K562 (cell line): ENCODE measurements at regions of chr1 and their contacts with region 1.

Region 1: DNA sequence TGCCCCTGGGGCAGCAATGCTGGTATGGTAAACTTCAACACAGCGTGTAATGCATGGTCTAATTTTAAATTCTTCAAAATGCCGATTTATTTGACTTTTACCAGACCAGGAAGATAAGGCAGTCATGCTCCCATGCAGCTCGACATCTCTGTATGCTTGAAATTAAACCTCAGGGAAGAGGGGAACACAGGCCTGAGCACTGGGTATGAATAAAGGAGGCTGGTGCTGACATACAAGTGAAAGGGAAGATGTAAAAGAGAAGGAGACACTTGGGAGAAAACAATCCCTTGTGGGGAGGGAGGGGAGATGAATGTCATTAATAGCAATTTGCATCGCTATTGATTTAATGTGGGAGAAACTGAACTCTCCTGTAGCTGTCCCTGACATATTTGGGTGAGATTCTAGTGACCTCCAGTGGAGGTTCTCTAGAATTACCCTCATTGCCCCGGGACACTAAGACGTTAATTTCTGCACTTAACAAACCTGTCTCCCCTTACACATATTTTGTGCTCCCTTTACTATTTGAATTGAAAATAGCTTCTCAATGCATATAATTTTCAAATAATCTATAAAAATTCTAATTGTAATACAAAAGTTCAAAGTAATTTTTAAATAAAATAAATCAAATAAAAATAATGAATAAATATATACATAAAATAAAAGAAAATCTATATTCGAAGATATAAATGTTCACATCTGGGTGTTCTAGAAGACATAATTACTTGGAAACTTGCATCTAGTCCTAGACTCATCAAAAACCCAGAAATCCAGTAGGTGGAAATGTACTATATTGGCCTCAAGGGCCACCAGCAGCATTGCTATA is 283.1 kb downstream of the LMX1A start:
- DNase-seq: peak in 3 of 4 experiments; percentile 23 to 57 (median 49)
- ATAC-seq: peak; percentile 88
- H3K4me3 ChIP-seq: no peak overlapping the region
- H3K27ac ChIP-seq: no peak overlapping the region
- H3K4me1 ChIP-seq: no peaks in the 10 kb centered on the region
- H3K27me3 ChIP-seq: no peaks in the 10 kb centered on the region
- CTCF ChIP-seq: peak; percentile 60 to 70 (median 61)
- EP300 ChIP-seq: no peak
- POLR2A ChIP-seq: no peak
- RAD21 ChIP-seq: peak; percentile 72 to 78

Region 2: GRCh38 chr1:163361123-163361934 is 1712.1 kb before region 1 on chr1:
- CTCF ChIA-PET with region 1: interaction called, 3 read pairs
- POLR2A ChIA-PET with region 1: no interaction called
- in situ Hi-C with region 1: no loop called
- intact Hi-C with region 1: loop called (anchors 1 kb)
- DNase-seq: peak in 2 of 4 experiments; percentile 18 to 30
- ATAC-seq: peak; percentile 78
- H3K4me3 ChIP-seq: no peak overlapping the region
- H3K27ac ChIP-seq: no peak overlapping the region
- H3K4me1 ChIP-seq: no peaks in the 10 kb centered on the region
- H3K27me3 ChIP-seq: no peaks in the 10 kb centered on the region
- CTCF ChIP-seq: peak; percentile 50 to 63 (median 55); a peak in 5 of 6 replicates
- EP300 ChIP-seq: no peak
- POLR2A ChIP-seq: no peak
- RAD21 ChIP-seq: peak; percentile 56 to 67

Region 3: DNA sequence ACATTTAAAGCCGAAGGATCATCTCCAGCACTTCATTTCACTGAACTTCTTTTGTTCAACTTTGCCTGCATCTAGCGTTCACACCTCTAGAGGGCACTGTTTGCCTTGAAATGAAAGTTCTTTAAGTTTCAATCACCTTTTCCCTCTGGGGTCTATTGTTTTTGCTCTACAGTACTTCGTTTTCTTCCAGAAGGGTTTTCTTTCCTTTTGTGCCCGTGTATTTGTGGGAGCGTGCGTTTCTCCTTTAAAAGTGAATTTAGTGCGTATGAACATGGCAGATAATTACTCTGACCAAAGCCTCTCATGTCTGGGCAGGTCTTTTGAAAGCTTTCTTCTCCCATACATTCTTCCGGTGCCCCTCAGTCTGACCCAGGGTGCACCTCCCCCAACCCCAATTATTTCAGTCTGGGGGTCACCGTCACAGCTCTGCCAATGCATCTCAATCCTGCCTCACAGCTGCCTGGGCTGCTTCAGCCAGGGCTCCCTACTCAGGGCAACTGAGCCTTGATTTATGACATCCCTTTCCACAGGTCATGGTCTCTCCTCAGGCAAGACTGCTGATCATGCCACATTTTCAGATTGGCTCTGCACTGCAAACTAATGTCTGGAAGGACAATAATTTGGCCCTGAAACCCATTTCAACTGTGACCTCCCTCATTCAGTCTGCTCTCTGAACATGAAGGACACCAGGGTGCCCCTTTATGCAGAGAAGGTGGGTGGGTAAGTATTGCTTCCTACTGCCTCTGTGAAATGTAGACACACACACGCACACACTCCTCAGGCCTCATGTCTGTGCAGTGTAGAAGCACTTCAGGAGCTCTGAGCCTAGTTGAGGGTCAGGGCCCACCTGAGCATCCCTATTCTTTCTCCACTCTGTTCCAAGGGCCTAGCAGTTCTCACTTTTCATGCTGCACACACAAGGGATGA is 1663.1 kb before region 1 on chr1:
- CTCF ChIA-PET with region 1: interaction called, 4 read pairs
- POLR2A ChIA-PET with region 1: no interaction called
- in situ Hi-C with region 1: loop called (anchors 25 kb)
- intact Hi-C with region 1: loop called (anchors 1 kb)
- DNase-seq: peak; percentile 30 to 72 (median 45)
- ATAC-seq: peak; percentile 74
- H3K4me3 ChIP-seq: no peak overlapping the region
- H3K27ac ChIP-seq: no peak overlapping the region
- H3K4me1 ChIP-seq: peaks cover 0 to 3% of the 10 kb centered on the region in 2 experiments; a peak in 1 of 5 replicates
- H3K27me3 ChIP-seq: no peaks in the 10 kb centered on the region; a peak in 1 of 5 replicates
- CTCF ChIP-seq: peak; percentile 57 to 85 (median 79)
- EP300 ChIP-seq: no peak
- POLR2A ChIP-seq: no peak
- RAD21 ChIP-seq: peak; percentile 72 to 85

Region 4: DNA sequence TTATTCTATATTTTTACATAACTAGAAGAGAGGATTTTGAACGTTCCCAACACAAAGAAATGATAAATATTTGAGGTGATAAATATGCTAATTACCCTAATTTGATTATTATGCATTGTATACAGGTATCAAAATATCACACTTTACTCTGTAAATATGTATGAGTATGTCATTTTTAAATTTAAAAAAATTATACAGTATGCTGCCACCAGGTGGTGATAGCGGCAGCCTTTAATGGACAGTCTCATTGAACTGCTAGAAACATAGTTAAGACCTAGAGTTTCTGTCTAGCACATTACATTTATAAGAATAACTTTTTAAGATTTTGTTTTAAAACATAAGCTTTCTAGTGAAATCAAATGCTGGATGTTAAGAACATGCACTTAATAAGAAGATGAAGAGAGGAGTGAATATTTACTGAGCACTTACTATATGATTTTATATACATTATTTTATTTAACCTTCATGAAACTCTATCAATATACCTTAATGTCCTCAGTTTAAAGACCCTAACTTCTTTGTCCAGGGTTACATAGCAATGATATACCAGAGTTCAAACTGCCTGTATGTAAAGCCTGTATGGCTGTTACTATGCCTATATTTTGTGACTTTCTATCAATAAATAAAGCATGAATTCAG is 1544.6 kb before region 1 on chr1:
- CTCF ChIA-PET with region 1: no interaction called
- POLR2A ChIA-PET with region 1: no interaction called
- in situ Hi-C with region 1: no loop called
- intact Hi-C with region 1: loop called (anchors 5 kb)
- DNase-seq: peak; percentile 13 to 37 (median 30)
- ATAC-seq: peak; percentile 78
- H3K4me3 ChIP-seq: no peak overlapping the region
- H3K27ac ChIP-seq: no peak overlapping the region
- H3K4me1 ChIP-seq: no peaks in the 10 kb centered on the region
- H3K27me3 ChIP-seq: no peaks in the 10 kb centered on the region
- CTCF ChIP-seq: peak; percentile 22 to 53 (median 28); a peak in 3 of 6 replicates
- EP300 ChIP-seq: no peak
- POLR2A ChIP-seq: no peak
- RAD21 ChIP-seq: peak; percentile 44 to 57

Region 5: GRCh38 chr1:164673584-164674214 is 399.7 kb before region 1 on chr1:
- CTCF ChIA-PET with region 1: no interaction called
- POLR2A ChIA-PET with region 1: interaction called, 5 read pairs
- in situ Hi-C with region 1: no loop called
- intact Hi-C with region 1: loop called (anchors 5 kb)
- DNase-seq: peak; percentile 68 to 81 (median 76)
- ATAC-seq: peak; percentile 89
- H3K4me3 ChIP-seq: no peak overlapping the region
- H3K27ac ChIP-seq: no peak overlapping the region
- H3K4me1 ChIP-seq: no peaks in the 10 kb centered on the region; a peak in 2 of 5 replicates
- H3K27me3 ChIP-seq: peaks cover 0 to 2% of the 10 kb centered on the region in 2 experiments; a peak in 2 of 5 replicates
- CTCF ChIP-seq: peak; percentile 63 to 93 (median 73)
- EP300 ChIP-seq: no peak
- POLR2A ChIP-seq: no peak
- RAD21 ChIP-seq: peak; percentile 55 to 63

Region 6: GRCh38 chr1:165138967-165139366 is 65.6 kb after region 1 on chr1:
- CTCF ChIA-PET with region 1: no interaction called
- POLR2A ChIA-PET with region 1: no interaction called
- in situ Hi-C with region 1: no loop called
- intact Hi-C with region 1: no loop called
- DNase-seq: no peak
- ATAC-seq: no peak
- H3K4me3 ChIP-seq: no peak overlapping the region
- H3K27ac ChIP-seq: no peak overlapping the region
- H3K4me1 ChIP-seq: no peaks in the 10 kb centered on the region
- H3K27me3 ChIP-seq: no peaks in the 10 kb centered on the region
- CTCF ChIP-seq: no peak
- EP300 ChIP-seq: no peak
- POLR2A ChIP-seq: no peak
- RAD21 ChIP-seq: no peak

Region 7: GRCh38 chr1:165152727-165153126 is 79.3 kb after region 1 on chr1:
- CTCF ChIA-PET with region 1: no interaction called
- POLR2A ChIA-PET with region 1: no interaction called
- in situ Hi-C with region 1: no loop called
- intact Hi-C with region 1: no loop called
- DNase-seq: peak in 2 of 4 experiments; percentile 13 to 22
- ATAC-seq: peak; percentile 80
- H3K4me3 ChIP-seq: no peak overlapping the region
- H3K27ac ChIP-seq: no peak overlapping the region
- H3K4me1 ChIP-seq: no peaks in the 10 kb centered on the region
- H3K27me3 ChIP-seq: peaks cover 0 to 3% of the 10 kb centered on the region in 2 experiments; a peak in 1 of 5 replicates
- CTCF ChIP-seq: peak; percentile 26 to 48 (median 46); a peak in 5 of 6 replicates
- EP300 ChIP-seq: no peak
- POLR2A ChIP-seq: no peak
- RAD21 ChIP-seq: peak; percentile 30 to 52